Mammary epithelial cell (primary cell): ENCODE measurements at regions of chr11 and their contacts with region 1.

Region 1: DNA sequence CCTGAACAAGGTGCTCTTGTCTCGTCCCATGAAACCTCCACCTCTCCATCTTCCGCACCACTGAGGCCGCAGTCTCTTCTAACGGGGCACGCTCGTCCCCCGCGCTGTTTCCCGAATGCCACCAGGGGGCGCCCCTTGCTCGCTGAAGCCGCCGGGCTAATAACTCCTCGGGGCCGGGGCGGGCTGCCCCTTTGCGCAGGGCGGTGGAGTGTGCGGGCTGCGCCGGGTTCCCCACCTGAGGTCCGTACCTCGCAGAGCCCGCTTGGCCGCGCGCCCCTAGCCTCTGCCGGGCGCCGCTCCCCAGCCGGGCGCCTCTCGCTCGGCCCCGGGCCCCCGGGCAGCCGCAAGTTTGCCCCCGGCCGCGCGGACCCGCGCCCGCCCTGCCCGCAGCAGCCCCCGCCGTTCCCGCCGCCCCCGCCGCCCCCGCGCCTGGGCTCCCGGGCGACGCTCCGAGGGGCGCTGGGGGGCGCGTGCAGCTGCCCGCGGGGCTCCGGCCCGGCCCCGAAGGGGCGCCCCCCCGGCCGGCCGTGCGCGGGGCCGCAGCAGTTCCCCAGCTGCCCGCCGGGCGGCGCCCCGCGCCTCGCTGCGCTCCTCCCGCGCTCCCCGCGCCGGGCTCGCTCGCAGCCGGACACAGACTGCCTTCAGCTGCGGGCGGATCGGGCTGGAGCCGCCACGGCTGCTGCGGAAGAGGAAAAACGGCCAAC is at the start of gene GRIK4:
- DNase-seq: peak; percentile 62
- H3K4me3 ChIP-seq: peak within 1 kb of the TSS in 2 of 3 experiments; percentile 40 to 42
- H3K27ac ChIP-seq: no peak within 1 kb of the TSS
- H3K4me1 ChIP-seq: no peaks in the 10 kb centered on the region
- H3K27me3 ChIP-seq: peaks cover 6% of the 10 kb centered on the region
- CTCF ChIP-seq: peak; percentile 67 to 95
- total RNA-seq, gene GRIK4: not detected

Region 2: GRCh38 chr11:120335908-120336640 is 175.2 kb before region 1 on chr11 and contains the start of gene ARHGEF12:
- CTCF ChIA-PET with region 1: no interaction called
- dilution Hi-C with region 1: no loop called
- in situ Hi-C with region 1: no loop called
- intact Hi-C with region 1: loop called (anchors 2 kb)
- DNase-seq: peak; percentile 93
- H3K4me3 ChIP-seq: peak within 1 kb of the TSS; percentile 63 to 97 (median 82)
- H3K27ac ChIP-seq: peak within 1 kb of the TSS; percentile 52
- H3K4me1 ChIP-seq: peaks cover 66% of the 10 kb centered on the region
- H3K27me3 ChIP-seq: no peaks in the 10 kb centered on the region
- CTCF ChIP-seq: peak in 1 of 2 donors; percentile 37
- total RNA-seq, gene ARHGEF12: 54.3 to 55.7 TPM

Region 3: GRCh38 chr11:120424185-120424969 is 86.9 kb before region 1 on chr11:
- CTCF ChIA-PET with region 1: no interaction called
- dilution Hi-C with region 1: no loop called
- in situ Hi-C with region 1: no loop called
- intact Hi-C with region 1: no loop called
- DNase-seq: peak; percentile 26
- H3K4me3 ChIP-seq: no peak overlapping the region
- H3K27ac ChIP-seq: no peak overlapping the region
- H3K4me1 ChIP-seq: peaks cover 10% of the 10 kb centered on the region
- H3K27me3 ChIP-seq: no peaks in the 10 kb centered on the region
- CTCF ChIP-seq: no peak

Region 4: DNA sequence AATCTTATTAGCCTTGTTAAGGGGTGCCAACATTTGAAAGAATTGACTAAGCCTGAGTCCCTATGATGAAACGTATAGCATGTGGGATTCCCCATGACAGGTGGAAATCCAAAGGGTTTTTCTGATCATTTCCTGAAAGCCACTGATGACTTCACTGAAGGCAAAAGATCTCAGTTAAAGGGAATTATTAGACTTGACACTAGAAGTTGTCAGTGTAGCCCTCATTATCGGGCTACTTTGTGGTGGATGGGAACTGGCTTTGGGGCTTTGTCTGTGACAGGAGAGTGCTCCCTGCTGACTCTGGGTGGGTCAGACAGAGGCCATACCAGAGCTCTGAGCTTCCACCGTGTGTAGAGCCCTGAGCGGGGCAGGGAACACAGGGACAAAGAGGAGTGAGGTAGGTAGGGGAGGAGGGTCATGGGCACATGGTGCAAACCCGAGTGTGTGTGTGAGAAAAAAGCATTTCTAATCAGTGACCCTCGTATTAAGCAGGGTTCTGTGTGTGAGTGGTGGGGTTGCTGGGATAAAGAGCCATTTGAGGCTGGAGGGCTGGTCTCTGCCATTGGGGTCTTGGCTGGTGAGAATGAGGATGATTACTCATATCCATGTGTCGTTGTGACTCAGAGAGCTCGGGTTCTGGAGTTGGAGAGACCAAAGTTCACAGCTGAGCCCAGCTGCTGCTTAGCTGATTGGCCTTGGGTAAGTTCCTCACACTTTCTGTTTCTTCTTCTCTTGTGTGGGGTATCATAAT is 101.4 kb after region 1 on chr11:
- CTCF ChIA-PET with region 1: no interaction called
- dilution Hi-C with region 1: no loop called
- in situ Hi-C with region 1: no loop called
- intact Hi-C with region 1: loop called (anchors 10 kb)
- DNase-seq: no peak
- H3K4me3 ChIP-seq: no peak overlapping the region
- H3K27ac ChIP-seq: no peak overlapping the region
- H3K4me1 ChIP-seq: no peaks in the 10 kb centered on the region
- H3K27me3 ChIP-seq: no peaks in the 10 kb centered on the region
- CTCF ChIP-seq: no peak

Region 5: DNA sequence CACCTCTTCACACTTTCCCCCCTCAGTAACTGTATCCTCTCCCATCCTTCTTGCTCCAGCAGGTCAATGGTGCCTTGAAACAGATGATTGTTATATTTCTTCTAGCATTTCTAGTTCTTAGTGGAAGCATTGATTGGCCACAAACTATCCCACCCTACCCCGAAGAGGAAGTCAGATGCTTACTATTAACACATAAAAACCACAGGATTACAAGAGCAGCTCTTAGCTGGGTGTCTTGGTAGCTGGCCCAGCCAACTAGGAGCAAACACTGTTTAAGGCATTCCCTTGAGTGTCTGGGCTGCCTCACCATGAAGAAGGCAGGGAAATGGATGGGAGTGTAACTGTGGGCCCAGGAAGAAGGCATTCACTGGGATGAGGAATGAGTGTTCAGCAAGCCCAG is 176.9 kb after region 1 on chr11:
- CTCF ChIA-PET with region 1: interaction called, 3 read pairs
- dilution Hi-C with region 1: loop called (anchors 25 kb)
- in situ Hi-C with region 1: loop called (anchors 5 kb)
- intact Hi-C with region 1: loop called (anchors 1 kb)
- DNase-seq: no peak
- H3K4me3 ChIP-seq: no peak overlapping the region
- H3K27ac ChIP-seq: no peak overlapping the region
- H3K4me1 ChIP-seq: no peaks in the 10 kb centered on the region
- H3K27me3 ChIP-seq: peaks cover 1% of the 10 kb centered on the region
- CTCF ChIP-seq: no peak

Region 6: GRCh38 chr11:120801801-120802689 is 290.8 kb after region 1 on chr11:
- CTCF ChIA-PET with region 1: no interaction called
- dilution Hi-C with region 1: no loop called
- in situ Hi-C with region 1: loop called in 1 of 2 experiments (anchors 25 kb)
- intact Hi-C with region 1: loop called (anchors 1 kb)
- DNase-seq: peak; percentile 40
- H3K4me3 ChIP-seq: no peak overlapping the region
- H3K27ac ChIP-seq: no peak overlapping the region
- H3K4me1 ChIP-seq: no peaks in the 10 kb centered on the region
- H3K27me3 ChIP-seq: no peaks in the 10 kb centered on the region
- CTCF ChIP-seq: peak; percentile 86 to 93

Region 7: GRCh38 chr11:120952461-120953434 is 441.5 kb after region 1 on chr11:
- CTCF ChIA-PET with region 1: no interaction called
- dilution Hi-C with region 1: no loop called
- in situ Hi-C with region 1: loop called in 1 of 2 experiments (anchors 25 kb)
- intact Hi-C with region 1: loop called (anchors 1 kb)
- DNase-seq: peak; percentile 56
- H3K4me3 ChIP-seq: no peak overlapping the region
- H3K27ac ChIP-seq: no peak overlapping the region
- H3K4me1 ChIP-seq: peaks cover 8% of the 10 kb centered on the region
- H3K27me3 ChIP-seq: peaks cover 3% of the 10 kb centered on the region
- CTCF ChIP-seq: peak; percentile 64 to 89

Region 8: GRCh38 chr11:121194731-121195596 is 683.7 kb after region 1 on chr11:
- CTCF ChIA-PET with region 1: no interaction called
- dilution Hi-C with region 1: no loop called
- in situ Hi-C with region 1: no loop called
- intact Hi-C with region 1: loop called (anchors 2 kb)
- DNase-seq: peak; percentile 41
- H3K4me3 ChIP-seq: no peak overlapping the region
- H3K27ac ChIP-seq: no peak overlapping the region
- H3K4me1 ChIP-seq: no peaks in the 10 kb centered on the region
- H3K27me3 ChIP-seq: peaks cover 5% of the 10 kb centered on the region
- CTCF ChIP-seq: peak; percentile 77 to 81